B cell (primary cell): ENCODE measurements at regions of chr1 and their contacts with region 1.

Region 1: DNA sequence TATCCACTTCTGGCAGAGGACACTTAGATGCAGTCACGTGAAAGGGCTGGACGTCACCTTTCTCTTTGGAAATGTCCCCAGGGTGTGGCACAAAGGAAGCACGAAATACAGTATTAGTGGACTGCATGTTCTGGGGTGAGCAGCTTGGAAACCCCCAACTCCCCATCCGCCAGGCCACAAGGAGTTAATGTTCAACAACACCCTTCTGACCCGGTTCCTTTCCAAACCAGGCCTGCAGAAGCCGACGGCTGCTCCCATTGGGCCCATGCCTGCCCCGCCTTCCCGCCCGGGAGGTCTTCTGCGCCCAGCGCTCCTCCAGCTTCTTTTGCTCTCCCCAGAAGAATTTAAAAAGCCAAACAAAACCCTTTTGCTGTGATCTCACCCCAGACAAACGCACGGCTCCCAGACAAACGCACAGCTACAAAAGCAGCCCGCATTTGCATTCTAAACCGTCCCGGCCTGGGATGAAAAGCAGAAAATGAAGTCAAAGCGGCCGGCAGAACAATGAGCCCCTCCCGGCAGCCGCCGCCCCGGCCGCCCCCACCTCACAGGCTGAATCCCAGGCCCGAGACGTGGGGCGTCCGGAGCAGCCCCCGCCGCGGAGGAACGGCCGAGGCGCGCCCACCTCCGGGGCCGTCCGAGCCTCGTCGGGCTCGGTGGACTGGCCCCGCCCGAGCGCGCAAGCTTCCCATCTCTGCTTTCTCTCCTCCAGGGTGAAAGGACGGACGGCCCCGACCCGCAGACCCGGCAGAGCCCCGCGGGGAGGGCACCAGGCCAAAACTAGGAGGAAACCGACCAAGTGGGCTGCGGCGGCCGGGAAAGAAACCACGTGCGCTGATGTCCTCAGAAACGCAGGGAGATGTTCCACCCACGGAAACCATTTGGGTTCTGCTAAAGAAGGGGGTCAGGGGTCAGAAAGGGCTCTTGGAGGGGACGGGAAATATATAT is 101.9 kb downstream of the PLPP3 start:
- DNase-seq: peak; percentile 23
- ATAC-seq: no peak
- H3K4me3 ChIP-seq: peak overlapping the region; percentile 31 to 57 (median 45)
- H3K4me3 Mint-ChIP-seq: peak overlapping the region; percentile 78
- H3K27ac ChIP-seq: no peak overlapping the region
- H3K27ac Mint-ChIP-seq: no peak overlapping the region
- H3K4me1 ChIP-seq: peaks cover 14 to 23% of the 10 kb centered on the region in 2 donors
- H3K4me1 Mint-ChIP-seq: peaks cover 24% of the 10 kb centered on the region
- H3K27me3 ChIP-seq: peaks cover 0 to 20% (median 13%) of the 10 kb centered on the region in 4 experiments
- H3K27me3 Mint-ChIP-seq: peaks cover 26% of the 10 kb centered on the region
- CTCF ChIP-seq: no peak

Region 2: DNA sequence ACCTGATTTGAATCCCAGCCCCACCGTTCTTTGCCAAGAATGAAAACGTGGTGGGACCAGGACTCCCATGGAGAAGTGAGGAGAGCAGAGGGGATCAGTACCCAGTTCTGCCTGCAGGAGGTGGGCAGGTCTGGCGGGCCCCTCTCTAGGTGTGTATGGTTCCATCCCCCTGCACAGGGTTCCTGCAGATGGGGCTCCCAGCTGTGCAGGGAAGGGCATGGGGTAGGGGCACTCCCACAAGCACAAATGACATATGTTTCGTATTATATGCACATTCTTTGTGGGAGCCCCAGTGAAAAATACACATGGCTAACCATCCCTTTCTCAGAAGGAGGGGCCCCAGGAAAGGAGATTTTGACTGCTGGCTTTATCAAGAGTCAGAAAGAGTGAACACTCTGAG is 42.7 kb before region 1 on chr1:
- CTCF ChIA-PET with region 1: no interaction called
- POLR2A ChIA-PET with region 1: no interaction called
- intact Hi-C with region 1: loop called (anchors 5 kb)
- DNase-seq: peak; percentile 32
- ATAC-seq: peak; percentile 26
- H3K4me3 ChIP-seq: no peak overlapping the region
- H3K4me3 Mint-ChIP-seq: peak overlapping the region; percentile 67
- H3K27ac ChIP-seq: no peak overlapping the region
- H3K27ac Mint-ChIP-seq: peak overlapping the region; percentile 33
- H3K4me1 ChIP-seq: peaks cover 63 to 69% of the 10 kb centered on the region in 2 donors
- H3K4me1 Mint-ChIP-seq: peaks cover 70% of the 10 kb centered on the region
- H3K27me3 ChIP-seq: no peaks in the 10 kb centered on the region
- H3K27me3 Mint-ChIP-seq: no peaks in the 10 kb centered on the region
- CTCF ChIP-seq: peak; percentile 44

Region 3: GRCh38 chr1:56456436-56457101 is 20.9 kb before region 1 on chr1:
- CTCF ChIA-PET with region 1: no interaction called
- POLR2A ChIA-PET with region 1: no interaction called
- intact Hi-C with region 1: no loop called
- DNase-seq: no peak
- ATAC-seq: no peak
- H3K4me3 ChIP-seq: no peak overlapping the region
- H3K4me3 Mint-ChIP-seq: no peak overlapping the region
- H3K27ac ChIP-seq: no peak overlapping the region
- H3K27ac Mint-ChIP-seq: no peak overlapping the region
- H3K4me1 ChIP-seq: no peaks in the 10 kb centered on the region
- H3K4me1 Mint-ChIP-seq: no peaks in the 10 kb centered on the region
- H3K27me3 ChIP-seq: peaks cover 0 to 2% (median 0%) of the 10 kb centered on the region in 4 experiments
- H3K27me3 Mint-ChIP-seq: no peaks in the 10 kb centered on the region
- CTCF ChIP-seq: no peak

Region 4: DNA sequence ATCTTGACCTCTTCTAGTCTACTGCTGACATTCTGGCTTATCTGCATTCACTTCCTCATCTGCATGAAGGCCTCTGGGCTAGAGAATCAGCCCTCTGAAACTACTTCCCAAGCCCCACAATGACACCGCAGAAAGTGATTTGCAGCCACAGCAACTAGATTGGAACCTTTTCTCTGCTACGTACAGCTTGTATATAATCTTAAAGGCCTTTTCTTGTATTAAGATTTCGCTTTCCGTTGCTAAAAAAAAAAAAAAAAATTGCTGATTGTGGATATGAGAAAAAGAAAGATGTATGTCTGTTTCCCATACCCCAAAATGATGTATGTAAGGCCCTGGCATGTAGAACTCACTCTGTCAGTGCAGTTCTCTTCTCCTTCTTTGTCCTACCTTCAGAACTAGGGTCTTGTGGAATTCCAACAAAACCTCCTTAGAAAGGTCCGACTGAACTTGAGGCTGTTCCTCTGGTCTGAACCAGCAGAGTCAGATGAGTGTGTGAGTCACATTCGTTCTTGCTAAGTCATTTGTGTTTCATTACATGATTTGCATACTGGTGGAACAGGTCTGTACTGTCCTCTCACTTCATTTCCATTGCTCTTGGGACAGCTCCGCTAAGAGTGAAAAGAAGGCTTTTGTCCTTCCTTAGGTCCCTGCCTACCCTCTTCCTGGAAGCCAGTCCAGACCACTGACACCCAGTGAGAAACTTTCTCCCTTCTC is 39.3 kb after region 1 on chr1:
- CTCF ChIA-PET with region 1: no interaction called
- POLR2A ChIA-PET with region 1: interaction called, 4 read pairs
- intact Hi-C with region 1: loop called (anchors 5 kb)
- DNase-seq: peak; percentile 53
- ATAC-seq: peak; percentile 90
- H3K4me3 ChIP-seq: no peak overlapping the region
- H3K4me3 Mint-ChIP-seq: peak overlapping the region; percentile 64
- H3K27ac ChIP-seq: no peak overlapping the region
- H3K27ac Mint-ChIP-seq: peak overlapping the region; percentile 55
- H3K4me1 ChIP-seq: peaks cover 15 to 17% of the 10 kb centered on the region in 2 donors
- H3K4me1 Mint-ChIP-seq: peaks cover 25% of the 10 kb centered on the region
- H3K27me3 ChIP-seq: no peaks in the 10 kb centered on the region
- H3K27me3 Mint-ChIP-seq: no peaks in the 10 kb centered on the region
- CTCF ChIP-seq: no peak

Region 5: GRCh38 chr1:56525489-56526041 is 48.1 kb after region 1 on chr1:
- CTCF ChIA-PET with region 1: no interaction called
- POLR2A ChIA-PET with region 1: interaction called, 4 read pairs
- intact Hi-C with region 1: loop called (anchors 1 kb)
- DNase-seq: peak; percentile 33
- ATAC-seq: peak; percentile 46
- H3K4me3 ChIP-seq: no peak overlapping the region
- H3K4me3 Mint-ChIP-seq: peak overlapping the region; percentile 46
- H3K27ac ChIP-seq: peak overlapping the region in 1 of 2 donors; percentile 17
- H3K27ac Mint-ChIP-seq: peak overlapping the region; percentile 70
- H3K4me1 ChIP-seq: peaks cover 44 to 48% of the 10 kb centered on the region in 2 donors
- H3K4me1 Mint-ChIP-seq: peaks cover 63% of the 10 kb centered on the region
- H3K27me3 ChIP-seq: no peaks in the 10 kb centered on the region
- H3K27me3 Mint-ChIP-seq: no peaks in the 10 kb centered on the region
- CTCF ChIP-seq: no peak